Common myeloid progenitor, CD34-positive (primary cell): ENCODE measurements at regions of chr22 and their contacts with region 1.

Region 1: DNA sequence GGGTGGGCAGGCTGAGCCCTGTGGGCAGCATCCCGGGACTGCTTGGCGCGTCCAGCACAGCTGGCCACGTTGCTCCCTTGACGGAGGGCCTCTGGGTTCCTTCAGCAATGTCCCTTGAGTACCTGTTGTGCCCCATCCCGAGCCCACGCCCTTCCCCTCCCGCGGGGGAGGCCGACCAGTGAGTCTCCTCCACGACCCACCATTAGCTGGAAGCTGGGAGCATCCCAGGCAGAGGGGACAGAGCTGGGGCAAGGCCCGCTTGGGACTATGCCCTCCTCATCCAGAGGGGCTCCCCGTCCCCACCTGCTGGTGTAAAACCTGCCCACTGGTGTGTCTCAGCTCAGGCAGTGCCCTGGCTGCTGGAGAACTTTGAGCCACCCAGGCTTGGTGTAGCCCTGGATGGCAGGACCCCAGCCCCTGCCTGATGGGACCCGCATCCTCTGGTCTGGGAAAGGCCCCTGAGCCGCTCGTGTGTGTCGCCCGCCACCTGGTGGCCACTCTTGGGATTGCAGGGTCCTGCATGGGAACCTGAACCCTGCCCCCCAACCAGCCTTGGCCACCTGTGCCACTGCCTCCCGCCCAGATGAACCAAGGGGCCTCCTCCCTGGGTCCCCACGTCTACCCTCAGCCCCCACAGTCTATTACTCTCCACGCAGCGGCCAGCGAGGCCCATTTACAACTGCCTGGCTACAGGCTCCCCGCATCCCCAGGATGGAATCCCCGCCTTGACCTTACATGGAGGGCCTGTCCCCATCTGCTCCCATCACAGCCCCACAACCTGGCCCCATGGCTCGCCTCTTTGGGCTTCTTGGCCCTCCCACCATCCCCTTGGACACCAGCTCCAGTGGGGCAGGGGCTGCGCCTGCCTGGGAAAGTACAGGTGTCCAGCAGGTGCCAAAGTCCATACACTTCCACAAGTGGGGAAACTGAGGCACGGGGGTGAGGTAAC is 16.6 kb upstream of the ARHGAP8 start:
- DNase-seq: peak; percentile 63 to 75 (median 69)
- H3K4me3 ChIP-seq: no peak overlapping the region
- H3K27ac ChIP-seq: no peak overlapping the region
- H3K4me1 ChIP-seq: peaks cover 0 to 4% (median 0%) of the 10 kb centered on the region in 4 experiments
- H3K27me3 ChIP-seq: no peaks in the 10 kb centered on the region

Region 2: GRCh38 chr22:44676441-44677352 is 59.1 kb before region 1 on chr22:
- CTCF ChIA-PET with region 1: interaction called, 10 read pairs
- POLR2A ChIA-PET with region 1: no interaction called
- DNase-seq: peak; percentile 97 to 100 (median 99)
- H3K4me3 ChIP-seq: peak overlapping the region; percentile 3 to 71 (median 64)
- H3K27ac ChIP-seq: peak overlapping the region; percentile 64 to 78
- H3K4me1 ChIP-seq: peaks cover 0 to 63% (median 50%) of the 10 kb centered on the region in 4 experiments
- H3K27me3 ChIP-seq: no peaks in the 10 kb centered on the region

Region 3: DNA sequence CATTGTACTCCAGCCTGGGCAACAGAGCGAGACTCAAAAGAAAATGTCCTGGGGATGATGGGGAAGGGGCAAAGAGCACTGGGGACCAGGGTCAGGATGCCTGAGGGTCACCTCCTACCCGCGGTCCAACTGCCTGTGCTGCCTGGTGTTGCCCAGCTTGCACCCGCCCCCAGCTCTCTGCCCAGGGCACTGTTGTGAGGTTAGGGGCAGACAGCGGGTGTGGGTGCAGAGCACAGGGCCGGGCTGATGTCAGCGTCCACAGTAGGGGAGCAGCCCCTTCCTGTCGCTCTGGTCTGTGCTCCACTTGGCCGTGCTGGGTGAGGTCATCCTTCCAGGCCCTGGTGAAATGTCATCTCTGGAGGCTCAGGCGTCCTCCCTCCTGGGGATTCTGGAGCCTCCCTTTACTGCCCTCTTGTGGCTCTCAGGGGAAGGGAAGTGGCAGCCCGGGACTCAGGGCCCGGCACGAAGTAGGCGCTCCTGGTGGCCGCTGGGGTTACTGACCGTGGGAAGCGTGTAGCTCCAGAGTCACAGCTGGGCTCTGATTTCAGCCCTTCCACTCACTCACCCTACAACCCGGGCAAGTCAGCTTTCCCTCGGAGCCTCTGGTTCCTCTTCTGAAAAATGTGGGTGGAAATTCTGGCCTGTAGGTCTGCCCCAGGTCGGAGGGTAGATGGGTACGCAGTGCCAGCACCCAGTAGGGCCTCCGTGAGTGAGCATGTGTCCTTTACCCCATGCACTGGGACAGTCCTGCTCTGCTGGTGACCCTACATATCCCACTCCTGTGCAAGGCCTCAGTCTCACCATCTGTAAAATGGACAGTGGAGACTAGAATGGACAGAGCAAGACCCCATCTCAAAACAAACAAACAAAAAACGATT is 51.1 kb before region 1 on chr22:
- CTCF ChIA-PET with region 1: interaction called, 11 read pairs
- POLR2A ChIA-PET with region 1: no interaction called
- DNase-seq: peak; percentile 88 to 95 (median 93)
- H3K4me3 ChIP-seq: no peak overlapping the region
- H3K27ac ChIP-seq: no peak overlapping the region
- H3K4me1 ChIP-seq: peaks cover 0 to 48% (median 32%) of the 10 kb centered on the region in 4 experiments
- H3K27me3 ChIP-seq: no peaks in the 10 kb centered on the region

Region 4: DNA sequence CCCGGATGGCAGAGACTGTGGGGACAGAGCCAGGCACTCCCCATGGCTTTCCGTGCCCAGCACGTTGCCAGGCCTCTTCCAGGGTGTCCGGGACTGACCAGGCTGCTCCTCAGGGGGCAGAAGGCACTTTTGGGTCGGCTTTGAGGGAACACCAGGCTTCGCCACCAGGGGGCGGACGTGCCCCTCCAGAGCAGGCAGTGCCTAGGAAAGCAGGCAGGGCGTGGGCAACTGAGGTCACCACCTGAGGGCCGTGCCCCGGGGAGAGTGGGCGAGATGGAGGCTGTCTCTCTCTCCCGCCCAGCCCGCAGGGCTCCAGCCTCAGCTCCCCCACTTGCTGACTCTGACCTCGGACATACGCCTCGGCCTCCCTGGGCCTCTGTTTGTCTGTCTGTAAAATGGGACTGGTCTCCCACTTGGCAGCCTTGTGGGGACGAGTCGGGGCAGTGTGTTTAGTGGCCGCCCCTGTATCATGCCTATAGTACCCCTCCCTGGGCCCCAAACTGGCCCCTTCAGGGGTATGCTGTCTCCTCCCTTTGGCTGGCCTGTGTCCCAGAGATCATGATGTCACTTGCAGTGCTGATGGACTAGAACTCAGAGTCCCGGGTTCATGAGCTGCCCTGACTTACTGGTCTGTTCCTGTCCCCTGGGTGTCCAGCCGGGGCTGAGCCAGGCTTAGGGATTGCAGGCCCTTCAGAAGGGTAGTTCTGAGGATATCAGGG is 38.2 kb before region 1 on chr22:
- CTCF ChIA-PET with region 1: interaction called, 156 read pairs
- POLR2A ChIA-PET with region 1: no interaction called
- DNase-seq: peak; percentile 72 to 85 (median 81)
- H3K4me3 ChIP-seq: no peak overlapping the region
- H3K27ac ChIP-seq: no peak overlapping the region
- H3K4me1 ChIP-seq: peaks cover 2 to 30% (median 23%) of the 10 kb centered on the region in 4 experiments
- H3K27me3 ChIP-seq: no peaks in the 10 kb centered on the region

Region 5: GRCh38 chr22:44710474-44711457 is 25.0 kb before region 1 on chr22:
- CTCF ChIA-PET with region 1: interaction called, 16 read pairs
- POLR2A ChIA-PET with region 1: no interaction called
- DNase-seq: peak in 2 of 3 donors; percentile 37 to 42
- H3K4me3 ChIP-seq: peak overlapping the region in 1 of 7 experiments; percentile 13
- H3K27ac ChIP-seq: no peak overlapping the region
- H3K4me1 ChIP-seq: peaks cover 0 to 28% (median 23%) of the 10 kb centered on the region in 4 experiments
- H3K27me3 ChIP-seq: no peaks in the 10 kb centered on the region

Region 6: GRCh38 chr22:44721206-44721605 is 14.6 kb before region 1 on chr22:
- CTCF ChIA-PET with region 1: interaction called, 11 read pairs
- POLR2A ChIA-PET with region 1: no interaction called
- DNase-seq: no peak
- H3K4me3 ChIP-seq: no peak overlapping the region
- H3K27ac ChIP-seq: no peak overlapping the region
- H3K4me1 ChIP-seq: no peaks in the 10 kb centered on the region
- H3K27me3 ChIP-seq: no peaks in the 10 kb centered on the region

Region 7: GRCh38 chr22:44828193-44828592 is 92.4 kb after region 1 on chr22:
- CTCF ChIA-PET with region 1: no interaction called
- POLR2A ChIA-PET with region 1: no interaction called
- DNase-seq: peak; percentile 13 to 24 (median 18)
- H3K4me3 ChIP-seq: no peak overlapping the region
- H3K27ac ChIP-seq: no peak overlapping the region
- H3K4me1 ChIP-seq: no peaks in the 10 kb centered on the region
- H3K27me3 ChIP-seq: no peaks in the 10 kb centered on the region